GM18951 (cell line): ENCODE measurements at regions of chr12 and their contacts with region 1.

Region 1: GRCh38 chr12:95623585-95624042 is 72.3 kb upstream of the USP44 start:
- POLR2A ChIP-seq: no peak

Region 2: GRCh38 chr12:95805864-95806671 is 182.5 kb after region 1 on chr12:
- in situ Hi-C with region 1: loop called (anchors 10 kb)
- POLR2A ChIP-seq: no peak